MCF 10A (cell line): ENCODE measurements at regions of chr7 and their contacts with region 1.

Region 1: GRCh38 chr7:81482600-81483186 is 287.2 kb downstream of the HGF start:
- DNase-seq: peak; percentile 22
- H3K4me3 Mint-ChIP-seq: no peak overlapping the region
- H3K27ac Mint-ChIP-seq: no peak overlapping the region
- H3K4me1 Mint-ChIP-seq: no peaks in the 10 kb centered on the region
- H3K27me3 Mint-ChIP-seq: peaks cover 10% of the 10 kb centered on the region
- CTCF ChIP-seq: peak; percentile 63

Region 2: DNA sequence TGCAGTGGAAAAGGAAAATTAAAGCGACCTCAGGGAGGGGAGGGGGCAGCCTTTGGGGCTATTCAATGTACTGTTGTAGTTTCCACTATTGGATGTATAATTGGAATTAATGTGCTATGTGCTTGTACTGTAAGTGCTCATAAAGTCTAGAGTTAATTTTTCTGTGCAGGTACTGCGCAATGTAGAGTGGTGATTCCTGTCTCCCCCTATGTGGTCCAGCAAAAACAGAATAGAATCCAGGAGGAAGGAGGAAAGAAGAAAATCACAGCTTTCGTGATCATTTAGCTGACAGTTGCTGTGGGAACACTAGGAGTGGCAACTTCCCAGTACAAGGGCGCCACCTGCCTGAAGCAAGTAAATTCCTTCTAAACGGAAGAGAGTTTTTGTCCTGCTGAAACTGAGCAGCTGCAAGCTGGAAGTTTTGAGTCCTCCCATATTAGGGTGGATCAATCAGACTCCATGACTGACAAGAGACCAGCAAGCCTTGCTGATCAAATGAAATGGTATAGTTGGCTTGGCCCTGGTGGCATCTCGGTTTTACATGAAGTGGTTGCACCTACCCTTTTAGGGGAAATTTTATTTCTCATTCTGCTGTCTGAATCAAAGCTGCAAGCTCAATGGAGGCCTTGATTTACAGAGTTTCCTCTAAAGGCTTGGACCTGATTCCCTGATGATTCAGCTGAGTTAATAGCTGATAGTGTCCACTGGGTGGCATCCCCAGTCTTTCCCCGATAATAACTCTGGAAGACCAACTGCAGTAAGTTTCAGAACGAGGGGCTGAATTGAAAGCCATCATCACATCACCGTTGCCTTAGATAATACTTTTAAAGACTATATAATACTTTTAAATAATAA is 12.6 kb before region 1 on chr7:
- CTCF ChIA-PET with region 1: interaction called, 13 read pairs
- POLR2A ChIA-PET with region 1: interaction called, 5 read pairs
- intact Hi-C with region 1: no loop called
- DNase-seq: peak; percentile 73
- H3K4me3 Mint-ChIP-seq: no peak overlapping the region
- H3K27ac Mint-ChIP-seq: no peak overlapping the region
- H3K4me1 Mint-ChIP-seq: peaks cover 7% of the 10 kb centered on the region
- H3K27me3 Mint-ChIP-seq: no peaks in the 10 kb centered on the region
- CTCF ChIP-seq: peak; percentile 65

Region 3: GRCh38 chr7:81715984-81716588 is 233.4 kb after region 1 on chr7:
- CTCF ChIA-PET with region 1: interaction called, 26 read pairs
- POLR2A ChIA-PET with region 1: no interaction called
- intact Hi-C with region 1: loop called (anchors 1 kb)
- DNase-seq: peak; percentile 58
- H3K4me3 Mint-ChIP-seq: no peak overlapping the region
- H3K27ac Mint-ChIP-seq: no peak overlapping the region
- H3K4me1 Mint-ChIP-seq: no peaks in the 10 kb centered on the region
- H3K27me3 Mint-ChIP-seq: no peaks in the 10 kb centered on the region
- CTCF ChIP-seq: peak; percentile 75

Region 4: DNA sequence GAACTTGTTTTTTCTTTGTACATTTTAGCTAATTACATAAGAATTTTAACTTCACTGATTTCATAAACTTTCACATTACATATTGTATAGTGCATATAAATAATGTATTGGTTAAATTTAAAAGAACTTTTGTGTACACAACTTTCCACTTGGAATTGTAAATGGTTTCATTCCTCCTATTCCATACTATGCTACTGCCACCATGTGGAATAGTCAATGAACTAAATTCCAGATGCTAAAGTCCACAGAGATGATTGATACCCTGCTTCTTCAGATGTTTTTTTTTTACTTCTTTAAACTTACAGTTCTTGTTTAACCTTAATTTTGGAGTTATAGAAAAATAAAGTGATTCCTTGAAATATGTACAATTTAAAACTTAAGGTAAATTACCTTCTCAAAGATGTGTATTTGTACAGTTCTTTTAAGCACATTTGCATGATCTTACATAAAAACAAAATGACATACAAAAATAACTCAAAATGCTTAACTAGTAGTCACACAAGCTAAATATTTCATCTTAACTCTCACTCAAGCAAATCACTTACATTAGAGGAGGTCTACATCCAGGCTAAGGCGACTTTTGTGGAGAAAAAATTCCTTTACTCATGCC is 534.7 kb after region 1 on chr7:
- CTCF ChIA-PET with region 1: interaction called, 61 read pairs
- POLR2A ChIA-PET with region 1: interaction called, 4 read pairs
- intact Hi-C with region 1: loop called (anchors 1 kb)
- DNase-seq: peak; percentile 28
- H3K4me3 Mint-ChIP-seq: no peak overlapping the region
- H3K27ac Mint-ChIP-seq: no peak overlapping the region
- H3K4me1 Mint-ChIP-seq: peaks cover 4% of the 10 kb centered on the region
- H3K27me3 Mint-ChIP-seq: peaks cover 39% of the 10 kb centered on the region
- CTCF ChIP-seq: peak; percentile 28

Region 5: DNA sequence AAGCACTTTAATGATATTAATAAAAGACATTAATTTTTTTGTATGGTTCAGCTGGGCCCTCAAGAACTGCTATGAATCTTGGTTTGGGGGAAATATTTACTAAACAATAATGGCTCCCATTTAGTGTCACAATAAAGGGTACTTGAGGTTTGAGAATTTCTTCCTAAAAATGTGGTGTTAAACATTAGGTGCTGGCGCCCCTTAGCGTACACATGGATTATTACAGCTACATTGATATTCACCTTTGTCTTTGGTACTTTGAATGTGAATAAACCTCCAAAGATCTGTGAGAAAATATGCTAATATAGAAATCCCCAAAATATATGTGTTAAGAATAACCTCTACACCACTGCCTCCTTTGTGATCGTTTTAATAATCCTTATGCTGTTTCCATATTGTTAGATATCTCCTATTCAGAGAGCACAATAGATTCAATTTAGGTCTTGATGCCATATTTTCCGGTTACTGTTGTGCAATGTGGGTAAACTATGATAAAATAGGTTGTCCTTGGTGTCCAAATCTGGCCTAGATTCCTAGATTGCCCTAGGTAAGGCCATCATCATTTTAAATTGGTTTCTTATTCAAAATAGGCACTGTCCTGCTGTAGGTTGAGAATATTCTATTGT is 1122.7 kb after region 1 on chr7:
- CTCF ChIA-PET with region 1: no interaction called
- POLR2A ChIA-PET with region 1: no interaction called
- intact Hi-C with region 1: loop called (anchors 10 kb)
- DNase-seq: peak; percentile 48
- H3K4me3 Mint-ChIP-seq: no peak overlapping the region
- H3K27ac Mint-ChIP-seq: no peak overlapping the region
- H3K4me1 Mint-ChIP-seq: no peaks in the 10 kb centered on the region
- H3K27me3 Mint-ChIP-seq: peaks cover 28% of the 10 kb centered on the region
- CTCF ChIP-seq: peak; percentile 54